ENCODE measurements at regions of chr6 and their contacts with region 1.

Region 1: GRCh38 chr6:7758456-7758855 is 32.6 kb downstream of the BMP6 start:
- DNase-seq: no peak
- ATAC-seq: no peak

Region 2: GRCh38 chr6:7742223-7742785 is 16.2 kb before region 1 on chr6:
- intact Hi-C with region 1: loop called (anchors 1 kb)
- DNase-seq: no peak
- ATAC-seq: no peak